ENCODE measurements at regions of chr11 and their contacts with region 1.

Region 1: GRCh38 chr11:117143871-117144476 is at the start of gene PAFAH1B2:
- DNase-seq: peak; percentile 97
- ATAC-seq: peak; percentile 97 to 98
- total RNA-seq, gene PAFAH1B2: 46.2 to 62.5 TPM

Region 2: GRCh38 chr11:117178210-117179034 is 34.4 kb after region 1 on chr11 and contains the start of gene SIDT2:
- intact Hi-C with region 1: loop called in 1 of 2 experiments (anchors 2 kb)
- DNase-seq: peak; percentile 97
- ATAC-seq: peak; percentile 94 to 96
- total RNA-seq, gene SIDT2: 40.8 to 48.5 TPM

Measured in left cardiac atrium (tissue), 4 donors.